ENCODE measurements at regions of chr19 and their contacts with region 1.

Region 1: DNA sequence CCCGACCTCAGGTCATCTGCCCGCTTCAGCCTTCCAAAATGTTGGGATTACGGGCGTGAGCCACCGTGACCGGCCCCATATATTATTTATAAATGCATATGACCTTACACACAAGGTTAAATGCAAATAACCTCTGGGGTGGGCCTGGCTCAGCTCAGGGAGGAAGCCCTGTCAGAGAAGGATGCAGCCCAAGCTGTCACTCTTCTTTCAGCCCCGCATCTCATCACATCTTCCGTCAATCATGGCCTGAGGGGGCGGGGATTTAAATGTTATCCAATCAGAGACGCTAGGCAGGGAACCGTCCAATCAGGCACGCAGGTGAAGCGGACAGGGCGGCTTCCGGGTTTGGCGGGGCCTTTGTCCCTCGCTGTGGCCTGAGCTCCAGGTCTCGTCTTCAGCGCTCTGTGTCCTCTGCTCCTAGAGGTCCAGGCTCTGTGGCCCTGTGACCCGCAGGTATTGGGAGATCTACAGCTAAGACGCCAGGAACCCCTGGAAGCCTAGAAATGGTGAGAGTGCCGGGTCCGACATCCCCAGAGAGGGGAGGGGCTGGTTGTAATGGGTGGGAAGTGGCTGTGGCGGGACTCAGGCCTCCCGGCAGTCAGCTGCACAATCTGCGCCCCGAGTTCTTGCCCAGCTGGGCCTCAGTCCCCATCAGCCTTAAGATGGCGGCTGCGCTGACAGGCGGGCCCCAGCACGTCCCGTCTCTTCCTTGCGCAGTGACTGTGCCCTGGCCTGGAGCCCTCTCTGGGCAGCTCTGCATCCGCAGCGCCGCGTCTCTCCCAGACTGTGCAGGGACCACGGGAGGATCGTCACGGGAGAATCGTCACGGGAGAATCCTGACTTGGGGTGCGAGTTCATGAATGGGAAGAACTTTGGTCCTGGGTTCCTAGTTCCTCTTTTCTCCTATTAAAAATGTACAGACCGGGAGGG is at the start of gene ZNF430:
- DNase-seq: peak; percentile 83 to 96 (median 93)
- ATAC-seq: peak; percentile 96 to 97 (median 96)
- H3K4me3 ChIP-seq: peak within 1 kb of the TSS; percentile 85 to 90
- H3K4me3 Mint-ChIP-seq: peak within 1 kb of the TSS; percentile 100
- H3K27ac ChIP-seq: peak within 1 kb of the TSS; percentile 97
- H3K27ac Mint-ChIP-seq: peak within 1 kb of the TSS; percentile 99 to 100
- H3K4me1 ChIP-seq: peaks cover 11 to 20% of the 10 kb centered on the region in 2 experiments
- H3K4me1 Mint-ChIP-seq: peaks cover 44 to 54% (median 51%) of the 10 kb centered on the region in 3 donors
- H3K27me3 ChIP-seq: no peaks in the 10 kb centered on the region
- H3K27me3 Mint-ChIP-seq: no peaks in the 10 kb centered on the region
- total RNA-seq, gene ZNF430: 33.2 to 47.3 (median 45.2) TPM

Region 2: DNA sequence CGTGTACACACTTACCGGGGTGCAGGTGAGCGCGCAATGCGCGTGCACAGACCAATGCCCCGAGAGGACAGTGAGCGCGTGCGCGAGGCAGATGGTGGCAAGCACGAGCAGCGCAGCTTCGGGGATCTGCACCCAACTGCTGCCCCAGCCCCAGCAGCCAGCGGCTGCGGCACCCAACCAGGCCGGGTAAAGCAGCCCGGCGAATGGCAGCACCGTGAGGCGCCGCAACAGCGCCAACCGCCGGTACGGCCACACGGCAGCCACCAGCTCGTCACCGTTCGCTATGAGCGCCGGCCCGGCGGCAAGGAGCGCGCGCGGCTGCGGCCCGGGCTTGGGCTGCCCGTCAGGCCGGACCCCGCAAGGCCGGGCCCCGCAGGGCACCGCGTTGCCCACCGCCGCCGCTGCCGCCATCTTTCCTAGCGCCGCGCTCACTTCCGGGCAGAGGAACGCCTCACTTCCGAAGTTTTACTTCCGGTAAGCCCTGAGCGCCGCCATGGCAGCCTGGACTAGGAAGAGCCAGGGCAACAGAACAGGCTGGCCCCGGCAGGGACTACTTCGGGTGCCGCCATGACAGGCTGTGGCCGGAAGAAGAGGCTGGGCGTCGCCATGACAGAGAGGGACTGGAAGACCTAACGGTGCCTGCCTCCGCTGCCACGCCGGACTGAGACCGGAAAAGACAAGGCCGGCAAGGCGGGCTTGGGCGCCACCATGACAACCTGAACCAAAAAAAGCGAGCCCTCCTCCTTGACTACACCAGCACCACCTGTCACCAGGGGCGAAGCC is 1357.1 kb before region 1 on chr19 and contains the start of gene ATP13A1:
- CTCF ChIA-PET with region 1: no interaction called
- POLR2A ChIA-PET with region 1: interaction called, 3 to 11 read pairs
- DNase-seq: peak; percentile 87 to 97 (median 92)
- ATAC-seq: peak; percentile 74 to 75 (median 74)
- H3K4me3 ChIP-seq: peak within 1 kb of the TSS; percentile 65 to 82
- H3K4me3 Mint-ChIP-seq: peak within 1 kb of the TSS; percentile 78 to 93 (median 92)
- H3K27ac ChIP-seq: peak within 1 kb of the TSS; percentile 91
- H3K27ac Mint-ChIP-seq: peak within 1 kb of the TSS; percentile 96 to 99
- H3K4me1 ChIP-seq: peaks cover 14 to 66% of the 10 kb centered on the region in 2 experiments
- H3K4me1 Mint-ChIP-seq: peaks cover 35 to 49% (median 46%) of the 10 kb centered on the region in 3 donors
- H3K27me3 ChIP-seq: no peaks in the 10 kb centered on the region
- H3K27me3 Mint-ChIP-seq: no peaks in the 10 kb centered on the region
- total RNA-seq, gene ATP13A1: 80.4 to 170 (median 156) TPM

Region 3: GRCh38 chr19:20999731-21000352 is 20.7 kb before region 1 on chr19:
- CTCF ChIA-PET with region 1: interaction called in 1 of 2 experiments, 5 read pairs
- POLR2A ChIA-PET with region 1: interaction called in 1 of 2 experiments, 15 read pairs
- DNase-seq: peak; percentile 56 to 92 (median 86)
- ATAC-seq: peak; percentile 100
- H3K4me3 ChIP-seq: peak overlapping the region; percentile 40 to 92
- H3K4me3 Mint-ChIP-seq: peak overlapping the region; percentile 77 to 85 (median 78)
- H3K27ac ChIP-seq: no peak overlapping the region
- H3K27ac Mint-ChIP-seq: no peak overlapping the region
- H3K4me1 ChIP-seq: peaks cover 5 to 9% of the 10 kb centered on the region in 2 experiments
- H3K4me1 Mint-ChIP-seq: peaks cover 5 to 8% (median 7%) of the 10 kb centered on the region in 3 donors
- H3K27me3 ChIP-seq: peaks cover 0 to 6% of the 10 kb centered on the region in 2 experiments
- H3K27me3 Mint-ChIP-seq: no peaks in the 10 kb centered on the region

Region 4: DNA sequence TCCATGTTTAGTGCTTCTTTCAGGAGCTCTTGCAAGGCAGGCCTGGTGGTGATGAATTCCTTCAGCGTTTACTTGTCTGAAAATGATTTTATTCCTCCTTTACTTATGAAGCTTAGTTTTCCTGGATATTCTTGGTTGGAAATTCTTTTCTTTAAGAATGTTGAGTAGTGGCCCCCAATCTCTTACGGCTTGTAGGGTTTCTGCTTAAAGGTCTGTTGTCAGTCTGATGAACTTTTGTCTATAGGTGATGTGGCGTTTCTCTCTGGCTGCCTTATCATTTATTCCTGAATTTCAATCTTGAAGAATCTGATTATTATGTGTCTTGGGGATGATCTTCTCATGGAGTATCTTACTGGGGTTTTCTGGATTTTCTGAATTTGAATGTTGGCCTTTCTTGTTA is 25.9 kb after region 1 on chr19:
- CTCF ChIA-PET with region 1: interaction called in 1 of 2 experiments, 3 read pairs
- POLR2A ChIA-PET with region 1: interaction called in 1 of 2 experiments, 10 read pairs
- DNase-seq: no peak
- ATAC-seq: no peak
- H3K4me3 ChIP-seq: no peak overlapping the region
- H3K4me3 Mint-ChIP-seq: no peak overlapping the region
- H3K27ac ChIP-seq: no peak overlapping the region
- H3K27ac Mint-ChIP-seq: no peak overlapping the region
- H3K4me1 ChIP-seq: no peaks in the 10 kb centered on the region
- H3K4me1 Mint-ChIP-seq: peaks cover 19 to 34% (median 31%) of the 10 kb centered on the region in 3 donors
- H3K27me3 ChIP-seq: no peaks in the 10 kb centered on the region
- H3K27me3 Mint-ChIP-seq: no peaks in the 10 kb centered on the region

Region 5: GRCh38 chr19:21148681-21149080 is 128.1 kb after region 1 on chr19:
- CTCF ChIA-PET with region 1: no interaction called
- POLR2A ChIA-PET with region 1: no interaction called
- DNase-seq: no peak
- ATAC-seq: no peak
- H3K4me3 ChIP-seq: no peak overlapping the region
- H3K4me3 Mint-ChIP-seq: no peak overlapping the region
- H3K27ac ChIP-seq: no peak overlapping the region
- H3K27ac Mint-ChIP-seq: no peak overlapping the region
- H3K4me1 ChIP-seq: peaks cover 0 to 2% of the 10 kb centered on the region in 2 experiments
- H3K4me1 Mint-ChIP-seq: peaks cover 40 to 55% (median 47%) of the 10 kb centered on the region in 3 donors
- H3K27me3 ChIP-seq: no peaks in the 10 kb centered on the region
- H3K27me3 Mint-ChIP-seq: no peaks in the 10 kb centered on the region

Region 6: GRCh38 chr19:21202865-21203494 is 182.4 kb after region 1 on chr19:
- CTCF ChIA-PET with region 1: no interaction called
- POLR2A ChIA-PET with region 1: no interaction called
- DNase-seq: peak in 22 of 35 experiments; percentile 2 to 74 (median 8)
- ATAC-seq: no peak
- H3K4me3 ChIP-seq: no peak overlapping the region
- H3K4me3 Mint-ChIP-seq: no peak overlapping the region
- H3K27ac ChIP-seq: no peak overlapping the region
- H3K27ac Mint-ChIP-seq: no peak overlapping the region
- H3K4me1 ChIP-seq: no peaks in the 10 kb centered on the region
- H3K4me1 Mint-ChIP-seq: no peaks in the 10 kb centered on the region
- H3K27me3 ChIP-seq: peaks cover 0 to 14% of the 10 kb centered on the region in 2 experiments
- H3K27me3 Mint-ChIP-seq: peaks cover 9 to 11% of the 10 kb centered on the region in 2 donors

Region 7: DNA sequence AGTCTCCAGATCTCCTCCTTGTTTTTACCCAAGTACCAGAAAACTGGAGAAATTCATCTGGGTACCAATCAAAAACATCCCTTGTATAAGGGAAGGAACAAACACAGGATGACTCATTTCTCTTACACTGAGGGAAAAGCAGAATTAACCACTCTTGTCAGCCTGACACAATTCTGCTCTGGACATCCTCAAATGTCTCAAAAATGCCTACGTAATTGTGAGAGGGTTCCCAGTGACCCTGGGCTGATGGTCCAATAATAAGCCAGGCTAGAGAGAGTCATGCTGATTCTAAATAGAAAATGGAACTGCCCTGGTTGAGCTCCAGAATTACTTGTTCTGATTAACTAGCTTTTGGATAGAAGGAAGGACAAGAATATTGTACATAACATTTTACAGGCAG is 294.1 kb after region 1 on chr19:
- CTCF ChIA-PET with region 1: no interaction called
- POLR2A ChIA-PET with region 1: no interaction called
- DNase-seq: no peak
- ATAC-seq: no peak
- H3K4me3 ChIP-seq: no peak overlapping the region
- H3K4me3 Mint-ChIP-seq: no peak overlapping the region
- H3K27ac ChIP-seq: no peak overlapping the region
- H3K27ac Mint-ChIP-seq: peak overlapping the region; percentile 15 to 66
- H3K4me1 ChIP-seq: peaks cover 0 to under 1% of the 10 kb centered on the region in 2 experiments
- H3K4me1 Mint-ChIP-seq: peaks cover 48 to 58% (median 56%) of the 10 kb centered on the region in 3 donors
- H3K27me3 ChIP-seq: no peaks in the 10 kb centered on the region
- H3K27me3 Mint-ChIP-seq: no peaks in the 10 kb centered on the region